Ascending aorta (tissue), 2 donors: ENCODE measurements at regions of chr4 and their contacts with region 1.

Region 1: DNA sequence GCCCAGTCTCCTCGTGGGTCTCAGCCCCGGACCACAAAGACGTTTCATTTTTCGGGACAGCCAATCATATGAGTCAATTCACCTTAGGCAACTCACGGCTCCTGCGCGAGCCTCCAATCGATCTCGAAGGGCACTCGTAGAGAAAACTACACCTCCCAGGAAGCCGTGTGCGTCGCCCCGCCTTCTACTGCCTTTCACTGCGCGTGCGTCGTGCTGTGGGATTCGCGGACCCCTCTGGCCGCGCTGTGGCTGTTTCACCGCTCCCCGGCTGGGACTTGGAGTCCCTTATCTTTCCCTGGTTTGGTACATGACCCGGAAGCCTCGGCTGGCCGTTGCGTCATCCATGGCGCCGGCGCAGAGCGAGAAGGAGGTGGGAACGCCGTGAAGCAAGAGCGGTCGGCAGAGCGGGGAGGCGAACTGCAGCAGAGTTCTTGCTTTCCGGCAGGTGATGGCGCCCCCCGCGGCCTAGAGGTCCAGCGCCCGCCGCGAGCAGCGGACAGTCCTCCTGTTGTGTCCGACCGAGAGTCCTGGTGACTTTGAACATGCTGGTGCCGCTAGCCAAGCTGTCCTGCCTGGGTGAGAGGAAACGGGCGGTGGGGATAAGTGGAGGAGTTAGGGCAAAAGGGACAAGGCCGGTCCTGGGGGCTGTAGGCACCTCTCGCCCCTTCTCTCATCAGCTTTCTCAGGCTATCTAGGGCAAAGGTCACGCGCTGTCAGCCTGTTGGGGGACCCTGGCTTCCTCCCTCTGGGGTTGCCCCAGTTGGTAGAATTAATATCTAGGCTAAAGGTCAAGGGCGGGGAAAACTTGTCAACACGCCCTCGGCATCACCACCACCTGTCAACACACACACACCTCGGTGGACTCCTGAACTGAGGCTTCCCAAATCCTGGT is at the start of gene ETFDH:
- DNase-seq: peak; percentile 98 to 100
- H3K4me3 ChIP-seq: peak within 1 kb of the TSS; percentile 69 to 87
- H3K27ac ChIP-seq: peak within 1 kb of the TSS; percentile 96 to 98
- H3K4me1 ChIP-seq: peaks cover 0 to 12% of the 10 kb centered on the region in 2 donors
- H3K27me3 ChIP-seq: no peaks in the 10 kb centered on the region
- CTCF ChIP-seq: peak; percentile 62 to 70 (median 65)
- total RNA-seq, gene ETFDH: 1.4 TPM

Region 2: GRCh38 chr4:157220371-157220881 is 1451.7 kb before region 1 on chr4 and contains the start of gene GRIA2:
- intact Hi-C with region 1: loop called (anchors 5 kb)
- DNase-seq: peak in 1 of 2 donors; percentile 83
- H3K4me3 ChIP-seq: peak within 1 kb of the TSS; percentile 71 to 79
- H3K27ac ChIP-seq: peak within 1 kb of the TSS; percentile 93 to 95
- H3K4me1 ChIP-seq: peaks cover 0 to 10% of the 10 kb centered on the region in 2 donors
- H3K27me3 ChIP-seq: no peaks in the 10 kb centered on the region
- CTCF ChIP-seq: no peak
- total RNA-seq, gene GRIA2: 3.0 TPM

Region 3: DNA sequence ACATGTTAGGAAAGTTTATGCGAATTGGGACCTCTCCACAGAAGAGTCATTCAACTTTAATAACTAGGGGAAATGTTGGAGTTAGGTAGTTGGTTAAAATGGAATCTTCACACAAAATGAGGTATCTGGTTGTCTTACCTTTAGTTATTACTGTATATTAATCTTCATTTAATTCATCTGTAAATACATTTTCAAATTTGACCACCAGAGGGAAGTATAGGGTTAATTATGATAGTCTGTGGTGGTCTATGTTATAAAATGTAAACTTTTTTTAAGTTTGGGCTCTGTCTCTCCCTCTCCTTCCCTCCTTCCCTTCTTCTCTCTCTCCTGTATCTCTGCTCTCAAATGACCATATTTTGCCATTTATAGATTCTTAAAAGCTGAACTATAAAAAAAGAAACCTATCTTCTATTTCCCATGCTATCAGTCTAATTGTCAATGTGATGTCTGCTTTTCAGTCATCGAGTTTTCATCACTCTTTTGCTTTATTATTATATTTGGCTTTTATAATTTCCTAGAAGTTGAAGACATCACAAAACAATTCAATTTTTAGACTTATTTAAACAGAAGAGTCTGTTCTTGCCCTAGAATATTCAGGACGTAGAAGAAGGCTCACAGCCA is 412.1 kb before region 1 on chr4:
- intact Hi-C with region 1: loop called (anchors 5 kb)
- DNase-seq: no peak
- H3K4me3 ChIP-seq: peak overlapping the region in 1 of 2 donors; percentile 46
- H3K27ac ChIP-seq: peak overlapping the region in 1 of 2 donors; percentile 27
- H3K4me1 ChIP-seq: no peaks in the 10 kb centered on the region
- H3K27me3 ChIP-seq: no peaks in the 10 kb centered on the region
- CTCF ChIP-seq: peak; percentile 32 to 49 (median 45)

Region 4: DNA sequence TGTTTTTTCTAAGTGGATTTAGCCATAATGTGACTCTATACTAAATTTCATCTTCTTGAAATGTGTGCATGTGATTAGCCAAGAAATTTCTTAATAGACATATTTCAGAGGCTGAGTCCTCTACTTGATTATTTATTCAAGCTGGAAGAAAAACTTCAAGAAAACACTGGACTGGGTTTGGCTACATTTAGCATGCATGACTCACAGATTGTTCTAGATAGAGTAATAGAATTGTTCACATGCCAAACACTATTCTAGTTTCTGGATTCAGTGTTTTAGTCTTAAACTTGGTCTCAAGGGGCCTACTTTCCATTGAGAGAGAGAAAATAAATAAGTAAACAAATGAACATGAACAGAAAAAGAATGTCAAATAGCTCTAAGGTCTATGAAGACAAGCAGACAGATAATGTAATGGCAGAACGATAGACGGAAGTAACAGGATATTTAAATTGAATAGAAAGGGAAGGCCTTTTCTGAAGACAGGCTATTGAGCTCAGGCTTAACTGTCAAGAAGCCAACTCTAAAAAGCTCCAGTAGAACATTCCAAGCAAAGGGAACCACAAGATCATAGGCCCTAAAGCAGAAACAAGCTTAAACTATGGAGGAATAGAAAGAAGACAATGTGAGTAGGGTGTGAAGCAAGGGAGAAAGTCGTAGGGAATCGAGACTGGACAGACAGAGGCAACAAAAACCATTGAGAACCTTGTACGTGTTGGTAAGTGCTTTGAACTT is 357.2 kb before region 1 on chr4:
- intact Hi-C with region 1: loop called (anchors 5 kb)
- DNase-seq: no peak
- H3K4me3 ChIP-seq: no peak overlapping the region
- H3K27ac ChIP-seq: peak overlapping the region; percentile 80 to 85
- H3K4me1 ChIP-seq: peaks cover 0 to 25% of the 10 kb centered on the region in 2 donors
- H3K27me3 ChIP-seq: no peaks in the 10 kb centered on the region
- CTCF ChIP-seq: no peak

Region 5: GRCh38 chr4:158624889-158625478 is 47.2 kb before region 1 on chr4:
- intact Hi-C with region 1: loop called (anchors 2 kb)
- DNase-seq: no peak
- H3K4me3 ChIP-seq: peak overlapping the region in 1 of 2 donors; percentile 37
- H3K27ac ChIP-seq: peak overlapping the region; percentile 30 to 70
- H3K4me1 ChIP-seq: peaks cover 0 to 4% of the 10 kb centered on the region in 2 donors
- H3K27me3 ChIP-seq: no peaks in the 10 kb centered on the region
- CTCF ChIP-seq: peak; percentile 68 to 73 (median 72)

Region 6: DNA sequence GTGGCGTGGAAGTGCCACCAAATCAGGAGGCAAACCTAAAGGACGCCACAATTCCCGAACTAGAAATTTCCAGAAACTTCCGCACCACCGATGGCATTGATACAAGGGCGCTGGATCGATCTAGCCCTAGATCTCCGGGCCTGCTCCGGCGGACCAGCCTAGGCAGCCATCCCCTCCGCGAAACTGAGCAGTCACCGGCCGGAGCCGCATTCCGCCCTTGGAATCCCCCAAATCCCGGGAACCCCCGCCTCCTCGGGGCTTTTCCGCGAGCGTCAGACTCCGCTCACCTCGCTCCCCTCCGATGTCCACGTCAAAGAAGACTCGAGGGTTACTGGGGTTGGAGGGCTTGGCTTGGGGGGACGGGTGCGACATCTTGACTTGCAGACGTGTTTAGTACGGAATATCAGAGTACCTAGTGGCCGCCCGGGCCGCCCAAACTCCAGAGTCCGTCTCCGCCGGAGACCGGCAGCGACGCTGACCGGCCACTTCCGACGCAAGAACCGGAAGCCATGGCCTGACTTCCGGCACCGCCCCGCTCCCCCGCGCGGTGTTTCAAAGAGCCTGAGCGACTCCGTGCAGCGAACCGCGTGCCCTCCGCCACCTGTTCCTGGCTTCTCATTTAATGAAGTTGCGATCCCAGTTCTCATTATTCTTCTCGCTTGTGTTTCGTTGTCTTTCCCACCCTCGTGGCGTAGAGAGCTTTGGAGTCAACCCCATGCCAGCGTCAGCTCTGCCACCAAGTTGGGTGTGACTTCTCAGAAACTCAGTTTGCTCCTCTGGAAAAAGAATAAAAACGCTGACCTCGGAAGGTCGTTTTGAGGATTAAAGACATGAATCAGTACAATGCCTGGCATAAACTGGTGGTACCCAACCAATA is 51.0 kb after region 1 on chr4 and contains the start of gene PPID:
- intact Hi-C with region 1: loop called (anchors 5 kb)
- DNase-seq: peak; percentile 11 to 90
- H3K4me3 ChIP-seq: peak within 1 kb of the TSS; percentile 68 to 85
- H3K27ac ChIP-seq: peak within 1 kb of the TSS; percentile 84 to 92
- H3K4me1 ChIP-seq: peaks cover 0 to 13% of the 10 kb centered on the region in 2 donors
- H3K27me3 ChIP-seq: no peaks in the 10 kb centered on the region
- CTCF ChIP-seq: no peak
- total RNA-seq, gene PPID: 20.8 TPM

Region 7: DNA sequence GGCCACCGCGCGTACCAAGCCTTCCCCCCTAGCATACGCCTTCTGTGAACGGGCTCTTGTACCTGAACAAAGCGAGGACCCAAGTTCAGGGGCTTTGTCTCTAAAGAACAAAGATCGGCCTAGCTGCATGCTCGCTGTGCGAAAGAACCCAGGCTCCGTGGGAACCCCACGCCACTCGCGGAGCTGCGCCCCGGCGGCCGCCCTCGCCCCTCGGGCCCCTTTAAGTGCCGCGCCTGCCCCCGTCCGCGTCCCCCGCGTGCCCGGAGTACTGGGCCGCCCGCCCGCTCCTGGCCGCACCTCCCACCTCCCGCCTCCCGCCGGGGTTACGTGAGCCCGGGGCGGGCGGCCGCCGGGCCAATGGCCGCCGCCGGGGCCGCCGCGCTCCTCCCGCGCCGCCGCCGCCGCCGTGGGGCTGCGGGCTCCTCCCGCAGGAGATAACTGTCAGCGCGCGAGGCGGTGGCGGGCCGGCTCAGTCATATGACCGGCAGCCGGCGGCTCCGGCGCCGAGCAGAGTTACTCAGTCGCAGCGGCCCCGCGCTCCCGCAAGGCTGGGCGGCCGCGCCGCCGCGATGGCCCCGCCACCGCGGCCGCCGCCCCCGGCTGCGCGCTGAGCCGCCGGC is 96.5 kb after region 1 on chr4 and contains the start of gene FNIP2:
- intact Hi-C with region 1: loop called (anchors 2 kb)
- DNase-seq: peak; percentile 45 to 88
- H3K4me3 ChIP-seq: peak within 1 kb of the TSS; percentile 86 to 99
- H3K27ac ChIP-seq: peak within 1 kb of the TSS; percentile 85 to 92
- H3K4me1 ChIP-seq: peaks cover 0 to 22% of the 10 kb centered on the region in 2 donors
- H3K27me3 ChIP-seq: no peaks in the 10 kb centered on the region
- CTCF ChIP-seq: no peak
- total RNA-seq, gene FNIP2: 44.1 TPM